HepG2 (cell line): ENCODE measurements at regions of chr16 and their contacts with region 1.

Region 1: DNA sequence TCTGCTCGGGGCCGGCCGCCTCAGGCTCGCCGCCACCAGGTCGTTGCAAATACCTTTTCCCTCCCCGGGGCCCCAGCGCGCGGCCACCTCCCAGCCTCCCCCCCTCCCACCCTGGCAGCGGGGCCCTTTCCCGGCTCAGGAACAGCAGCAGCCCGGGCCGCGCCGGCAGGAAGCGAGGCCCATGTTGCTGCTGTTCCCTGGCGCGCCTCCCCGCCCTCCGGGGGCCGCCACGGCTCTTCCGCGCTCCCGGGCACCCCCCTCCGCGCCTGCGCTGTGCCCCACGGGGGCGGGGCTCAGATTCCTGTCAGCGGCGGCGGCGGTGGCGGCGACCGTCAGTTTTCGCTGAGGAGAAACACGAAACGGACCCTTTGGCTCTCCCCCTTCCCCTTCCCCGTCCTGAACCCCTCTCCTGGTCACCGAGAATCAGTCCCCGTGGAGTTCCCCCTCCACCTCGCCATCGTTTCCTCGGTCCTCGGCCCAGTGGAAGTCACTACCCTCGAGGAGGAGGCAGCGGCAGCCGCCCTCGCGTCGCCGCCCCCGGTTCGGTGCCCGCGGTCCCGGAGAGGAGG is at the start of gene NFAT5:
- DNase-seq: peak; percentile 92
- ATAC-seq: peak; percentile 85
- H3K4me3 ChIP-seq: peak within 1 kb of the TSS; percentile 94 to 99 (median 98)
- H3K27ac ChIP-seq: peak within 1 kb of the TSS; percentile 95
- H3K4me1 ChIP-seq: peaks cover 60% of the 10 kb centered on the region
- H3K27me3 ChIP-seq: no peaks in the 10 kb centered on the region; a peak in 1 of 5 replicates
- CTCF ChIP-seq: peak; percentile 63
- EP300 ChIP-seq: peak; percentile 86 to 100; a peak in 3 of 4 replicates
- POLR2A ChIP-seq: peak; percentile 43 to 84
- RAD21 ChIP-seq: peak; percentile 71
- total RNA-seq, gene NFAT5: 20.5 and 49.3 TPM in 2 replicates

Region 2: GRCh38 chr16:69465083-69465721 is 100.6 kb before region 1 on chr16:
- CTCF ChIA-PET with region 1: no interaction called
- POLR2A ChIA-PET with region 1: no interaction called
- in situ Hi-C with region 1: no loop called
- intact Hi-C with region 1: loop called (anchors 2 kb)
- DNase-seq: peak; percentile 45
- ATAC-seq: peak; percentile 66
- H3K4me3 ChIP-seq: peak overlapping the region in 2 of 3 experiments; percentile 3 to 38; a peak in 3 of 6 replicates
- H3K27ac ChIP-seq: peak overlapping the region; percentile 82
- H3K4me1 ChIP-seq: peaks cover 73% of the 10 kb centered on the region
- H3K27me3 ChIP-seq: no peaks in the 10 kb centered on the region
- CTCF ChIP-seq: peak; percentile 64
- EP300 ChIP-seq: no peak; a peak in 1 of 4 replicates
- POLR2A ChIP-seq: no peak; a peak in 2 of 4 replicates
- RAD21 ChIP-seq: peak; percentile 40

Region 3: GRCh38 chr16:69520800-69521602 is 44.8 kb before region 1 on chr16:
- CTCF ChIA-PET with region 1: no interaction called
- POLR2A ChIA-PET with region 1: interaction called, 10 read pairs
- in situ Hi-C with region 1: no loop called
- intact Hi-C with region 1: no loop called
- DNase-seq: peak; percentile 92
- ATAC-seq: peak; percentile 94
- H3K4me3 ChIP-seq: peak overlapping the region; percentile 14 to 47 (median 20); a peak in 4 of 6 replicates
- H3K27ac ChIP-seq: peak overlapping the region; percentile 63
- H3K4me1 ChIP-seq: peaks cover 48% of the 10 kb centered on the region
- H3K27me3 ChIP-seq: no peaks in the 10 kb centered on the region
- CTCF ChIP-seq: peak; percentile 26; the same call in 1 of the 2 replicates
- EP300 ChIP-seq: peak in 1 of 2 experiments; percentile 50; a peak in 1 of 4 replicates
- POLR2A ChIP-seq: no peak
- RAD21 ChIP-seq: no peak

Region 4: DNA sequence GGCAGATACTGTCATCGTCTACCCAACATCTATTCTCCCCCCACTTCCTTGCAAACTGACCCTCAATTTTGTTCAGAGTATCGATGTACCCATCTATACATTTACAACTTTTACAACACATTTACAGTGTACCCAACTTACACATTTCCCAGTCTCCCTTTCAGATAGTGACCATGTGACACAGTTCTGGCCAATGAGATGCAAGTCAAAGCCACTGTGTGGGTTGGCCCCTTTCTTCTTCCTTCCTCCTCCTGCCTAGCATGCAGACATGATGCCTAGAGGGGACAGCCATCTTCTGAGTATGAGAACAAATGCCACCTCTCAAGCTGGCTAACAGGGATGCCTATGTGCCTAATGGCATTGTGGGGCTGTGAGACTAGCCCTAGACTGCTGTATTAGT is 11.3 kb before region 1 on chr16:
- CTCF ChIA-PET with region 1: no interaction called
- POLR2A ChIA-PET with region 1: interaction called, 17 read pairs
- in situ Hi-C with region 1: no loop called
- intact Hi-C with region 1: no loop called
- DNase-seq: no peak
- ATAC-seq: no peak
- H3K4me3 ChIP-seq: no peak overlapping the region
- H3K27ac ChIP-seq: no peak overlapping the region
- H3K4me1 ChIP-seq: peaks cover 15% of the 10 kb centered on the region
- H3K27me3 ChIP-seq: no peaks in the 10 kb centered on the region
- CTCF ChIP-seq: no peak
- EP300 ChIP-seq: no peak
- POLR2A ChIP-seq: no peak
- RAD21 ChIP-seq: no peak

Region 5: DNA sequence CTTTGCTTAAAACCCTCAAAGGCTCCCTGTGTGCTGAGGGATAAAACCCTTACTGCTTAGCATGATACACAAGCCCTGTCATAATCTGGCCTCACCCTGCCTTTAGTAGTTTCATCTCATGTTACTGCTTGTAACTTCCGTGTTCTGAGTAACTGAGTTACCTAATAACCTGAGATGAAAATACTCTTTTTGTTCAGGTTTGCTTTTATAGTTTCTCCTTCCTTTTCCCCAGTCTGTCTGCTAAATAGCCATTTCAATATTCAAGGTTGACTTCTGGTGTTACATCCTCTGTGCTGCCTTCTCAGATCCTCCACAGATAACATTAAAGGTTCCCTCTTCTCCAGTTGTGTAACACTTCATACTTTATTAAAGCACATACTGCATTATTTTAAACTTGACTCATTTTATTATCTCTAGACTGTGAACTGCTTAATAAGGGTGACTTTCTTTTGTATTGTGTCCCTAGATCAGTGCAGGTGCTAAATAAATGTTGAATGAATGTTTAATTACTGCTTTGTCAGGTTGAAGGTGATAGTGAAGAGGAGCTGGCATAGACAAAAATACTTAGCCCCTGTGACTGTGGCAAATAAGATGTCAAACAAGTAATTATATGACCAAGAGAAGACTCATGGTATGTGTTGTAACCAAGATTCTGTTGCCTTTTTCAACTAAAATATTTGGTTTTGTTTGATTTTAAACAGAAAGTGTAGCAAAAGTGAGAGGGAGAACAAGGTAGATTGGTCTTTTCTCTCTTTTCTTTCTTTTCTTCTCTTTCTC is 47.8 kb after region 1 on chr16:
- CTCF ChIA-PET with region 1: no interaction called
- POLR2A ChIA-PET with region 1: no interaction called
- in situ Hi-C with region 1: no loop called
- intact Hi-C with region 1: loop called (anchors 5 kb)
- DNase-seq: peak; percentile 36
- ATAC-seq: no peak
- H3K4me3 ChIP-seq: no peak overlapping the region
- H3K27ac ChIP-seq: no peak overlapping the region
- H3K4me1 ChIP-seq: peaks cover 59% of the 10 kb centered on the region
- H3K27me3 ChIP-seq: no peaks in the 10 kb centered on the region
- CTCF ChIP-seq: no peak
- EP300 ChIP-seq: no peak
- POLR2A ChIP-seq: no peak
- RAD21 ChIP-seq: no peak